ENCODE measurements at regions of chr6 and their contacts with region 1.

Region 1: GRCh38 chr6:31769684-31770371 is 7.3 kb downstream of the VWA7 start:
- H3K4me3 ChIP-seq: no peak overlapping the region
- H3K27ac ChIP-seq: no peak overlapping the region
- H3K4me1 ChIP-seq: no peaks in the 10 kb centered on the region
- CTCF ChIP-seq: peak; percentile 93

Region 2: DNA sequence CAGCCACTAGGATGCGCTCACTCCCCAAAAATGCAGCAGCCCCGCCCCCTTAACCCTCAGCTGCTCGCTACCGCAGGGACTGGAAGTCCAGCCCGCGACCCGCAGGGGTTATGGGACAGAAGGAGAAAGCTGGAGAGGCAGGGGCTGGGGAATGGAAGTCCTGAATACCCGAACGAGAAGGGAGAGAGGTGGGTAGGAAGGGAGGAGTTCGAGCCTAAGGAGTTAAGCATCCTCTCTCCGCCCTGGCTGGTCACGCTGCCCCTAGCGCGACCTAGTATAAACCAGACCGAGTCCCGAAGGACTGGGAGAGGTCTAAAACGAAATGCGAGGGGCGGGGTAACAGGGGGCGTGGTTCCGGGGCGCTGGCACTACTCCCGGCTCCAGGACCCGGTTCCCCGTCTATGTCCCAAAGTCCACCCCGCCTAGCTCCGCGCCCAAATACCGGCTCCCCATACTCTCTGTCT is 40.3 kb before region 1 on chr6:
- CTCF ChIA-PET with region 1: interaction called, 28 read pairs
- POLR2A ChIA-PET with region 1: interaction called, 4 read pairs
- H3K4me3 ChIP-seq: peak overlapping the region; percentile 74
- H3K27ac ChIP-seq: peak overlapping the region; percentile 67; the same call in 1 of the 2 replicates
- H3K4me1 ChIP-seq: peaks cover 3% of the 10 kb centered on the region
- CTCF ChIP-seq: peak; percentile 94

Region 3: GRCh38 chr6:31752739-31753319 is 17.0 kb before region 1 on chr6:
- CTCF ChIA-PET with region 1: interaction called, 13 read pairs
- POLR2A ChIA-PET with region 1: interaction called, 7 read pairs
- H3K4me3 ChIP-seq: no peak overlapping the region
- H3K27ac ChIP-seq: no peak overlapping the region
- H3K4me1 ChIP-seq: no peaks in the 10 kb centered on the region
- CTCF ChIP-seq: no peak

Region 4: GRCh38 chr6:31795616-31796298 is 25.9 kb after region 1 on chr6 and contains the start of gene VARS1:
- CTCF ChIA-PET with region 1: interaction called, 19 read pairs
- POLR2A ChIA-PET with region 1: interaction called, 7 read pairs
- H3K4me3 ChIP-seq: peak within 1 kb of the TSS; percentile 81
- H3K27ac ChIP-seq: peak within 1 kb of the TSS; percentile 93
- H3K4me1 ChIP-seq: no peaks in the 10 kb centered on the region; the same call in 1 of the 2 replicates
- CTCF ChIP-seq: peak; percentile 100

Region 5: GRCh38 chr6:31933537-31933936 is 163.7 kb after region 1 on chr6:
- CTCF ChIA-PET with region 1: no interaction called
- POLR2A ChIA-PET with region 1: no interaction called
- H3K4me3 ChIP-seq: no peak overlapping the region
- H3K27ac ChIP-seq: no peak overlapping the region
- H3K4me1 ChIP-seq: no peaks in the 10 kb centered on the region
- CTCF ChIP-seq: no peak

Region 6: GRCh38 chr6:31971993-31972708 is 202.3 kb after region 1 on chr6 and contains the start of gene DXO:
- CTCF ChIA-PET with region 1: no interaction called
- POLR2A ChIA-PET with region 1: no interaction called
- H3K4me3 ChIP-seq: peak within 1 kb of the TSS; percentile 83
- H3K27ac ChIP-seq: peak within 1 kb of the TSS; percentile 74
- H3K4me1 ChIP-seq: peaks cover 5% of the 10 kb centered on the region
- CTCF ChIP-seq: no peak

Measured in HEK293 (cell line).